ENCODE measurements at regions of chr4 and their contacts with region 1.

Region 1: GRCh38 chr4:1870578-1871443 is at the start of gene NSD2:
- DNase-seq: peak; percentile 93 to 98 (median 94)
- ATAC-seq: peak; percentile 62
- H3K4me3 ChIP-seq: peak within 1 kb of the TSS; percentile 95
- H3K27ac ChIP-seq: peak within 1 kb of the TSS; percentile 99
- H3K4me1 ChIP-seq: peaks cover 24 to 32% of the 10 kb centered on the region in 2 experiments
- H3K27me3 ChIP-seq: no peaks in the 10 kb centered on the region
- CTCF ChIP-seq: no peak
- EP300 ChIP-seq: no peak
- POLR2A ChIP-seq: peak; percentile 85
- RAD21 ChIP-seq: no peak
- polyA plus RNA-seq, gene NSD2: 6.4 to 9.7 TPM

Region 2: DNA sequence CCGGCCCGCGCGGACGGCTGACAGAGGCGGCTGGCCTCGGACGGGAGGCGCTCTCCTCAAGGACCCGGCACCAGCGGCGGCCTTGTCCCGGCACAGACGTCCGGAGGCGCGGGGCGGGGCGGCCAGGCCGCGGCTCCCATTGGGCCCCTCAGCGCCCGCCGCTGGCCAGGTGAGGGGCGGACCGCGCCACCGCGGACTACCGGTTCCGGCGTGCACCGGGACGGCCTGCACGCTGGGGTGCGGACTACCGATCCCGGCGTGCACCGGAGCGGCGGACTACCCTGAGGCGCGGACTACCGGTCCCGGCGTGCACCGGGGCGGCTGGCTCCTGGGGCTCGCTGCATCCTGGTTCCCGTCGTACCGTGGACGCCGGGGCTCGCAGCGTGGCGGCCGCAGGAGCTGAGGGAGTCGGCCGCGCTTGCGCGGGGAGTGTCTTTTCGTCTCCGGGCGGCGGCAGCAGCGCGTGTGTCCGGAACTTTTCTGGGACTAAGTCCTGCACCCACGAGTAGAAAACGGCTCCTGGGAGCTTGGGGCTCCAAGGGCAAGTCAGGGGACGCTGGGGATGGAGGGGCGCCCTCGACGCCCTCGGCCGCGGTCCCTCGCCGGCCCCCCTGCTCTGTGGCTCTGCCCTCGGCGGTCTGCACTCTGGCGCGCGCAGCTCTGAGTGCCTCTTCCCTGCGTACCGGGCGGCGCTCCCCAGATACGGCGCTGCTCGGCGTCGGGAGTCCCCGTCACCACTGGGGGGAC is 14.6 kb before region 1 on chr4 and contains the start of gene LETM1:
- CTCF ChIA-PET with region 1: interaction called, 6 read pairs
- POLR2A ChIA-PET with region 1: interaction called, 17 read pairs
- in situ Hi-C with region 1: no loop called
- intact Hi-C with region 1: no loop called
- DNase-seq: peak; percentile 91 to 96 (median 93)
- ATAC-seq: peak; percentile 95
- H3K4me3 ChIP-seq: peak within 1 kb of the TSS; percentile 94
- H3K27ac ChIP-seq: peak within 1 kb of the TSS; percentile 84
- H3K4me1 ChIP-seq: peaks cover 40 to 61% of the 10 kb centered on the region in 2 experiments
- H3K27me3 ChIP-seq: no peaks in the 10 kb centered on the region
- CTCF ChIP-seq: peak in 1 of 3 experiments; percentile 46; a peak in 1 of 6 replicates
- EP300 ChIP-seq: no peak
- POLR2A ChIP-seq: peak; percentile 90
- RAD21 ChIP-seq: no peak
- polyA plus RNA-seq, gene LETM1: 3.9 to 5.6 TPM

Region 3: DNA sequence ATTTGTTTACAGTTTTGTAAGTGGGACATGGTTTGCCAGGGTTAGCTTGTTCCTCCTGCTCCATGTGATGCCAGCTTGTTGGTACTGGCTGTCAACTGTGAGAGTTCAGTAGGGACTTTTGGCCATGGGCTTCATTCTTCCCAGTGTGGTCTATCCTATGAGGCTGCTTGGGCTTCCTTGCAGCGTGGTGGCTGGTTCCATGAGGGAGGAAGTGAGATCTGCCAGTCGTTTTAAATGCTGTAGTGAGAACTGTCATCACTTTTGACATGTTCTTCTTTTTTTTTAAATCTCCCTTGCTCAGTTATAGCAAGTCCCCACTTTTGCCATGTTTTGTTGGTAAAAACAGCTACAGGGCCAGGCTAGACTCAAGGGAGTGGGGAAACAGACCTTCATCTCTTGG is 16.2 kb after region 1 on chr4:
- CTCF ChIA-PET with region 1: no interaction called
- POLR2A ChIA-PET with region 1: interaction called, 28 read pairs
- in situ Hi-C with region 1: no loop called
- intact Hi-C with region 1: no loop called
- DNase-seq: no peak
- ATAC-seq: no peak
- H3K4me3 ChIP-seq: no peak overlapping the region
- H3K27ac ChIP-seq: peak overlapping the region; percentile 57; the same call in 1 of the 3 replicates
- H3K4me1 ChIP-seq: peaks cover 33 to 52% of the 10 kb centered on the region in 2 experiments
- H3K27me3 ChIP-seq: no peaks in the 10 kb centered on the region
- CTCF ChIP-seq: no peak
- EP300 ChIP-seq: no peak
- POLR2A ChIP-seq: no peak
- RAD21 ChIP-seq: no peak

Measured in K562 (cell line).